Naive thymus-derived CD4-positive, alpha-beta T cell (primary cell): ENCODE measurements at regions of chrX and their contacts with region 1.

Region 1: DNA sequence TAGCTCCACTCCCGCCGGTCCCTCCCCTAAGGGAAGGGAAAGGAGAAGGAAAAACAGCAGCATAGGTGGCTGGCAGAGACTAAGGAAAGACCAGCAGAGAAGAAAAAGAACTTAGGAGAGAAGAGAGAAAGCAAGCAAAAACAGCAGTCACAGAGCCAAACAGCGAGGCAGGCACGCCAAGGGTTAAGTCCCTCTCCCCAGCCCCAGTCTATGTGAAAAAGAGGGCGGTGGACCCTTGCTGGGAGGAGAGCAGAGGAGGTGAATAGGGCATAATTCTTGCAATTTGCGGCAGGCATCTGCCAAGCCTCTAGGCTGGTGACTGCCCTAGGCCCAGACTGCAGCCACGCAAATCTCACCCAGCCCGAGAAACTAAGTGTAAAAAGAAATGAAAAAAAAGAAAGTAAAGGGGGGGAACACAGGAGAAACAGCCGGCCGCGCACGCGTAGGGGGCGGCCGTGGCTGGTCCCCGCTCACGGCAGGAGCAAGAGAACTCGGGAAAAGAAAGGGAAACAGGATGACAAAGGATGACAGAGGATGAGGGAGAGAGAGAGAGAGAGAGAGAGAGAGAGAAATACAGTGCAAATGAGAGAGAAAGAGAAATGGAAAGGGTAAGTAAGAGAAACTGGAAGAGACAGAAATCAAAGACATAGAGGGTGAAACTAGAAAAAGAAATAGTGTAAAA is 48.6 kb downstream of the MAGEA9 start:
- DNase-seq: peak in 6 of 9 donors; percentile 5 to 23 (median 12)
- ATAC-seq: peak; percentile 78
- H3K4me3 ChIP-seq: peak overlapping the region; percentile 32
- H3K4me3 Mint-ChIP-seq: peak overlapping the region; percentile 64 to 89 (median 84)
- H3K27ac ChIP-seq: peak overlapping the region; percentile 67
- H3K27ac Mint-ChIP-seq: peak overlapping the region; percentile 17 to 97 (median 86)
- H3K4me1 ChIP-seq: peaks cover 5 to 7% of the 10 kb centered on the region in 2 donors
- H3K4me1 Mint-ChIP-seq: peaks cover 14 to 42% (median 24%) of the 10 kb centered on the region in 7 donors
- H3K27me3 ChIP-seq: no peaks in the 10 kb centered on the region
- H3K27me3 Mint-ChIP-seq: peaks cover 0 to 4% (median 0%) of the 10 kb centered on the region in 5 donors

Region 2: GRCh38 chrX:149512225-149512885 is 318.0 kb before region 1 on chrX:
- CTCF ChIA-PET with region 1: no interaction called
- POLR2A ChIA-PET with region 1: no interaction called
- intact Hi-C with region 1: loop called (anchors 5 kb)
- DNase-seq: peak in 8 of 9 donors; percentile 34 to 56 (median 48)
- ATAC-seq: peak; percentile 88
- H3K4me3 ChIP-seq: no peak overlapping the region
- H3K4me3 Mint-ChIP-seq: peak overlapping the region in 1 of 10 donors; percentile 28
- H3K27ac ChIP-seq: no peak overlapping the region
- H3K27ac Mint-ChIP-seq: peak overlapping the region in 5 of 9 donors; percentile 17 to 71 (median 45)
- H3K4me1 ChIP-seq: peaks cover 4 to 16% of the 10 kb centered on the region in 2 donors
- H3K4me1 Mint-ChIP-seq: peaks cover 0 to 39% (median 13%) of the 10 kb centered on the region in 7 donors
- H3K27me3 ChIP-seq: no peaks in the 10 kb centered on the region
- H3K27me3 Mint-ChIP-seq: peaks cover 0 to 10% (median 0%) of the 10 kb centered on the region in 5 donors

Region 3: DNA sequence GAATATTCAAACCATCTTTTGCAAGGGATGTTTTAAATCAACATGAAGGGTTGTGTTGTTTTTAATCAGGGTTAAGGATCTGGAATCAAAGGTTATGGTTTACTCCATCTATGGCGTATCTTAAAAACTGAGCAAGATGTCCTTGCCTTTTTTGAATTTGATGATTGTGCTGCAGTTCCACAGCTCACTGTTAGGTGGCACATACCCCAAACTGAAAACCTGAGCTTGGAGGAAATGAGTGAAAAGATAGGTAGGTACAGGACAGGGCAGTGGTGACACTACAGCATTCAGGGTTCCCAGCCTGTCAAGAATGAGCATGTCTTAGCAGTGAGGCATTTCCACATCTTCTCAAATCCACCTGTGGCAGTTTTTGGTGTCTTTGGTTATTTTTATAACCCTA is 302.6 kb before region 1 on chrX:
- CTCF ChIA-PET with region 1: no interaction called
- POLR2A ChIA-PET with region 1: no interaction called
- intact Hi-C with region 1: loop called in 1 of 2 experiments (anchors 5 kb)
- DNase-seq: peak in 7 of 9 donors; percentile 27 to 62 (median 36)
- ATAC-seq: peak; percentile 43
- H3K4me3 ChIP-seq: no peak overlapping the region
- H3K4me3 Mint-ChIP-seq: peak overlapping the region in 3 of 10 donors; percentile 4 to 33 (median 10)
- H3K27ac ChIP-seq: no peak overlapping the region
- H3K27ac Mint-ChIP-seq: peak overlapping the region; percentile 35 to 88 (median 77)
- H3K4me1 ChIP-seq: peaks cover 18 to 26% of the 10 kb centered on the region in 2 donors
- H3K4me1 Mint-ChIP-seq: peaks cover 0 to 31% (median 14%) of the 10 kb centered on the region in 7 donors
- H3K27me3 ChIP-seq: no peaks in the 10 kb centered on the region
- H3K27me3 Mint-ChIP-seq: no peaks in the 10 kb centered on the region

Region 4: GRCh38 chrX:149648932-149649331 is 181.4 kb before region 1 on chrX:
- CTCF ChIA-PET with region 1: no interaction called
- POLR2A ChIA-PET with region 1: no interaction called
- intact Hi-C with region 1: no loop called
- DNase-seq: no peak
- ATAC-seq: no peak
- H3K4me3 ChIP-seq: no peak overlapping the region
- H3K4me3 Mint-ChIP-seq: no peak overlapping the region
- H3K27ac ChIP-seq: no peak overlapping the region
- H3K27ac Mint-ChIP-seq: no peak overlapping the region
- H3K4me1 ChIP-seq: no peaks in the 10 kb centered on the region
- H3K4me1 Mint-ChIP-seq: peaks cover 0 to 2% (median 0%) of the 10 kb centered on the region in 7 donors
- H3K27me3 ChIP-seq: no peaks in the 10 kb centered on the region
- H3K27me3 Mint-ChIP-seq: peaks cover 0 to 4% (median 0%) of the 10 kb centered on the region in 5 donors

Region 5: DNA sequence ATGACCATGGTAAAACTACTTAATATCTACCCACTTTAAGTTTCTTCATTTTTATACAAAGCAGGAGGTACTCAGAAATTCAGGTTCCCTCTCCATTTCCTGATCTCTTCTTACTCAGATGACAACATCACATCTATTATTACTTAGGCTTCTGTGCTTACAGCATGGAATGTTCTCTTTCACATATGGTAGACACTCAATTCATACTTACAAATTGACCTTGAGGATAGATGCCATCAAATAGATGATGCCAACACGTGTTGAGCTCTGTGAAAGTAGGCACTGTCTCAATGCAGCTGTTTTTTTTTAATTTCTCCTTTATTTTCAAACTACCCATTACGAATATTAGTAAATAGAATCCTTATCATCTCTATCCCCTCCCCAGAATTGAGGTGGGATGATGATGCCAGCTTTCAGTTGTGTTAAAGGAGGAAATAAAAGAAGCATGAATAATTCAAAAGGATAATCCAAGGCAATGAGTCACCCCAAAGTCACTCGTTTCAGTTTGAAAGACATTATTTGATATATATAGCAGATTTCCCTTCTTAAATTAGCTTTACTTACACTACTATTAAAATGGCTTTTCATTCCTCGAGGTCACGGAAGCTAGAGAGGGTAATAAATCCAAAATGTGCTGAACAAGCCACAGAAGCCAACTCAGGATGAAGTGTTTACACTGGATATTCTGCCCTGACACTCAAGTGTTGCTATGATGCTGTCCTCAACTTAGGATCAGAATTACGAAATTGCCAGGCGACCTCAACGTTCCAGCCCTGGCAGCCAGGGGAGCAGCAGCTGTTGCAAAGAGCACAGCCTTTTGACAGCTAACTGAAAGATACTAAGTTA is 232.2 kb after region 1 on chrX:
- CTCF ChIA-PET with region 1: no interaction called
- POLR2A ChIA-PET with region 1: no interaction called
- intact Hi-C with region 1: no loop called
- DNase-seq: no peak
- ATAC-seq: no peak
- H3K4me3 ChIP-seq: no peak overlapping the region
- H3K4me3 Mint-ChIP-seq: no peak overlapping the region
- H3K27ac ChIP-seq: no peak overlapping the region
- H3K27ac Mint-ChIP-seq: no peak overlapping the region
- H3K4me1 ChIP-seq: no peaks in the 10 kb centered on the region
- H3K4me1 Mint-ChIP-seq: no peaks in the 10 kb centered on the region
- H3K27me3 ChIP-seq: no peaks in the 10 kb centered on the region
- H3K27me3 Mint-ChIP-seq: peaks cover 0 to 8% (median 3%) of the 10 kb centered on the region in 5 donors